ENCODE measurements at regions of chr14 and their contacts with region 1.

Region 1: DNA sequence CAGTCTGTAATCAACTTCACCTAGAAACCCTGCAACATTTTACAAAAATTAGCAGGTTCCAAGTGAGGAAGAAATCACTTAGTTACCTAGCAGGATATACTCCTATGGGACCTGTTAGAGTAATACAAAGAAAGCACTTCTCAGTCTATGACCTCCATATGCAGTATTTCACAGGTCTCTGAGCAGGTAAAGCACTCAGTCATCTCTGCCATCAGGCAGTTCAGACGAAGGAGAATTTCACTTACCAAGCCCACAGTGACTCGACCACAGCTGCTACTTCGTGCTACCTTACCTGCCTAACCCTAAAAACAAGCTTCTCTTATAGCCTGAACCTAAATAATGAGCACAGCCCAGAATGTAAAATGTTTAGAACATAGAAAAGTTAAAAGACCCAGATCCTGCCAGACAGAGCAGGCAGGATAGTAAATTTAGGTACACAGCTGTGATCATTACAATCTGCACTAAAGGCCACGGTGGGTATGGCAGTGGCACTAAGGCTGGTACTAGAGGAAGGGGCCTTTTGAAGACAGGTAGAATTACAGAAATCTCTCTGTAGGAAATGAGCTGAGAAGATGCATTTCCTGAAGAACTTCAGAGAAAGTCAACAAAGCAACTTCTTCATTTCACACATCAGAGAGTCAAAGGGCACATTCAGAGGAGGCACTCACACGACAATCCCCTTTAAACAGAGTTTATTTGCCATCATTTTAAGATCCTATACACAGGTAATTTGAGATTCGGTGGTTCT is 35.7 kb downstream of the DCAF5 start:
- DNase-seq: no peak
- ATAC-seq: no peak
- H3K4me3 ChIP-seq: no peak overlapping the region
- H3K27ac ChIP-seq: no peak overlapping the region
- H3K4me1 ChIP-seq: peaks cover 0 to 18% (median 4%) of the 10 kb centered on the region in 12 donors
- H3K27me3 ChIP-seq: no peaks in the 10 kb centered on the region
- CTCF ChIP-seq: no peak
- POLR2A ChIP-seq: no peak

Region 2: GRCh38 chr14:67819563-67820421 is 1297.4 kb before region 1 on chr14 and contains the start of gene RAD51B:
- intact Hi-C with region 1: loop called in 1 of 10 experiments (anchors 10 kb)
- DNase-seq: peak; percentile 84 to 91 (median 88)
- ATAC-seq: peak; percentile 79 to 87 (median 86)
- H3K4me3 ChIP-seq: peak within 1 kb of the TSS; percentile 65 to 92 (median 74)
- H3K27ac ChIP-seq: peak within 1 kb of the TSS in 9 of 12 donors; percentile 26 to 76 (median 51)
- H3K4me1 ChIP-seq: peaks cover 0 to 46% (median 15%) of the 10 kb centered on the region in 12 donors
- H3K27me3 ChIP-seq: no peaks in the 10 kb centered on the region
- CTCF ChIP-seq: no peak
- POLR2A ChIP-seq: no peak
- total RNA-seq, gene RAD51B: 1.5 to 11.3 (median 3.8) TPM